ENCODE measurements at regions of chr5 and their contacts with region 1.

Region 1: GRCh38 chr5:39148983-39149534 is 70.3 kb downstream of the FYB1 start:
- DNase-seq: peak in 3 of 14 experiments; percentile 62 to 74 (median 70)
- ATAC-seq: peak; percentile 62
- H3K4me3 ChIP-seq: no peak overlapping the region
- H3K4me3 Mint-ChIP-seq: peak overlapping the region; percentile 0
- H3K27ac ChIP-seq: peak overlapping the region; percentile 58 to 61
- H3K27ac Mint-ChIP-seq: peak overlapping the region; percentile 86
- H3K4me1 ChIP-seq: peaks cover 51% of the 10 kb centered on the region
- H3K4me1 Mint-ChIP-seq: peaks cover 80% of the 10 kb centered on the region
- H3K27me3 ChIP-seq: no peaks in the 10 kb centered on the region
- H3K27me3 Mint-ChIP-seq: no peaks in the 10 kb centered on the region
- CTCF ChIP-seq: peak; percentile 66

Region 2: DNA sequence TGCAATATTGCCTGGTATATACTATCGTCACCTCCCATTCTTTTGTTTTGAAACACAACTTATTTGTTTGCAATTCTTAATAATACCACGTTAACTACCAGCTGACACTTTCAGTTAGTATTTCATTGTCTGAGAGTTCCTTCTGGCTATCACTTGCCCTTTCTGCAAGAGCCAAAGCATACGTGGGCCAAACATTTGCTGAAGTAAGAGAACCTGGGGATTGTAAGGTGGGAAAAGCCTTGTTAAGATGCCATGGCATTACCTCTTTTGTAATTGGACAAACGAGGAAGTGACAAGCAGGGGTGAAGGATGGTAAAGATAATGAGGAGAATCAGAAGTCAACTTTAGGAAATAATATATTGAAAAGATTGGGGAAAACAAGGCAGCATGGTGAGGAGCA is 22.6 kb after region 1 on chr5:
- CTCF ChIA-PET with region 1: no interaction called
- POLR2A ChIA-PET with region 1: interaction called, 141 read pairs
- intact Hi-C with region 1: loop called in 1 of 2 experiments (anchors 2 kb)
- DNase-seq: no peak
- ATAC-seq: no peak
- H3K4me3 ChIP-seq: no peak overlapping the region
- H3K4me3 Mint-ChIP-seq: peak overlapping the region; percentile 52
- H3K27ac ChIP-seq: peak overlapping the region; percentile 23 to 36
- H3K27ac Mint-ChIP-seq: peak overlapping the region; percentile 96
- H3K4me1 ChIP-seq: peaks cover 63% of the 10 kb centered on the region
- H3K4me1 Mint-ChIP-seq: peaks cover 97% of the 10 kb centered on the region
- H3K27me3 ChIP-seq: no peaks in the 10 kb centered on the region
- H3K27me3 Mint-ChIP-seq: no peaks in the 10 kb centered on the region
- CTCF ChIP-seq: no peak

Region 3: DNA sequence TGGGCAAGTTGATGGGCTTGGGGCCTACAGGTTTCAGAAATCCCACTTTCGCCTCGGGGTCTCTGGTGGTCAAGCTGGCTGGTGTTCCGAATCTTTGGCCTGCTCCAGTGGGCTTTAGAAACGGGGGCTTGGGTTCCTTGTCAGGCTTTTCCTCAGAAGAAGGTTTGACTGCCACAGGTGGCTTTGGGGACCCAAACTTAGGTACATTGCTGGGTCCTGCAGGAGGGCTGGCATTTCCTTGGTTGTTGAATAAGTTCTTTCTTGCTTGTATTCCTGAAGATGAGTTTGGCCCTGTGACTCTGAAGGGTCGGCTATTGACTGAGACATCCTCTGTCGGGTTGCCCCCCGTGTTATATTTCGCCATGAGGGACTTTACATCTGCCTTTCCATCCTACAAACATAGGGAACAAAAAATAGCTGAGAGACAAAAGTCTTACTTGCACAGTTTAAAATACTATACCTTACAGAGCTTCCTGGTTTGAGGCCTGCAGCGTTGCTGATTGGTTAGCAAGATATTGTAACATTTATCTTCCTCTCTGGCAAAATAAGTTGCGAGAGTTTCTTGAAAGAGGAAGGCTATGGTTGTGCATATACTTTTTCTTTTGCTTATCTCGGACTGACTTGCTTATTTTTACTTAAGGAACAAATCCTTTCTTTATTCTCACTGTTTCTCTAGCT is 53.7 kb after region 1 on chr5:
- CTCF ChIA-PET with region 1: interaction called, 4 read pairs
- POLR2A ChIA-PET with region 1: interaction called, 11 read pairs
- intact Hi-C with region 1: loop called (anchors 2 to 5 kb)
- DNase-seq: peak in 6 of 14 experiments; percentile 35 to 83 (median 68)
- ATAC-seq: peak; percentile 62
- H3K4me3 ChIP-seq: peak overlapping the region; percentile 76
- H3K4me3 Mint-ChIP-seq: peak overlapping the region; percentile 93
- H3K27ac ChIP-seq: peak overlapping the region; percentile 82
- H3K27ac Mint-ChIP-seq: peak overlapping the region; percentile 96
- H3K4me1 ChIP-seq: peaks cover 28% of the 10 kb centered on the region
- H3K4me1 Mint-ChIP-seq: peaks cover 45% of the 10 kb centered on the region
- H3K27me3 ChIP-seq: no peaks in the 10 kb centered on the region
- H3K27me3 Mint-ChIP-seq: no peaks in the 10 kb centered on the region
- CTCF ChIP-seq: no peak

Measured in CD4-positive, alpha-beta T cell (primary cell).